GM12878 (cell line): ENCODE measurements at regions of chr6 and their contacts with region 1.

Region 1: DNA sequence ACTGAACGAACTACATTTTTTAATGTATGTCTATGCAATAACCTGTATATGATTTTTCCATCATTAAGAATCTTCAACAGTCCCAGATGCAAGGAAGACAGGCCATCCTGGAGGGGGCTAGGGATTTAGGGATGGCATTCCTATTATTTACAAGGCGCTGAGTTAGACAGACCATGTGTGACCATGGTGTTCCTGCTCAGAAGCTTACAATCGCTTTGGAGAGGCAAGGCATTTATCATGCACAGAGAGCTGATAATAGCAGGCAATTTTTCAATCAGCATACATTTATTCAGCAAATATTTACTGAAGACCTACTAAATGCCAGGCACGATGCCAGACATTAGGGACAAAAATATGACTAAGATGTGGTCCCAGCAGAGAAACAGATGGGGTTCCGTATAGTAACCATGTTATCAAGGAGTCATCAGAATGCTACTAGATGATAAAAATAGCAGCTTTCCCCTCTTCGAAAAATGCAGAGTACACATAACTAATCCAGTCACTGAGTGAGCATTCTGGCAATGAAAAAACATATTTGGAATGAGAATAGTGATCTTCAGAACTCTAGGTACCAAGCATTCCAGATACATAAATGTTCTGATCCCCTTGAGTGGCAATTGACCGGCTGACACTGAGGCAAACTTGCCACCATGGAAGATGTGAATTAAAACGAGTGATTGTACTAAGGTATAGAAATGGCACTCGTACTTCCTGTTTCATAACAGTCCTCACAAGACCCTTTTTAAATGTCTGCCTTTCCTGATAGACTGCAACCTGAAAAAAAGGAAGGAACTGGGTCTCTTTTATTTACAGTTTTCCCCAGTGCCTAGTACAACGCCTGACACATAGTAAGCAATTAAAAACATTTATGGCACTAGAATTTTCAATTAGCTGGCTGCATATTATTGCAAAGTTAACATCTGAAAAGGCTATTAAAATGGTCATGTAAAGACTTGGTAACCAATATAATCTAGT is 135.7 kb downstream of the ATXN1 start:
- DNase-seq: no peak
- ATAC-seq: no peak
- H3K4me3 ChIP-seq: no peak overlapping the region
- H3K27ac ChIP-seq: no peak overlapping the region
- H3K4me1 ChIP-seq: peaks cover 11% of the 10 kb centered on the region
- H3K27me3 ChIP-seq: no peaks in the 10 kb centered on the region
- CTCF ChIP-seq: no peak
- EP300 ChIP-seq: no peak
- POLR2A ChIP-seq: no peak
- RAD21 ChIP-seq: no peak

Region 2: DNA sequence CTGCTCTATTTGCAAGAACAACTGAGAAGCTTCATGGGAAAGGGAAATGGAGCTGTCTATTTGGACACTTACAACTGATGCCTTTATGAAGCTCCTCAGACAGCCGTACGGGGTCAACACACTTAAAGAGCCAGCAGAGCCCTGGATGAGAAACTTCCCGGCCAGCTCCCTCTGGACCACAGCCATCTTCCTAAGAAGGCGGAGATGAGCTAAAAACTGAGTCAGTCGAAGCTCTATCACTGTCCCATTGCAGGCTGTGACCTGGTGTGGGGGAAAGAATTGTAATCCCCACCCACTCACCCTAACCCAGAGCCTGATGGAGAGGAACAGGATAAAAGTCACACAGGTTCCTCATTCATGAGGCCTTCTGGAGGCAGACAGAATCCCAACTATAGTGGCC is 1740.1 kb before region 1 on chr6:
- CTCF ChIA-PET with region 1: no interaction called
- POLR2A ChIA-PET with region 1: interaction called, 10 read pairs
- RAD21 ChIA-PET with region 1: no interaction called
- SMC1A ChIA-PET with region 1: no interaction called
- in situ Hi-C with region 1: no loop called
- intact Hi-C with region 1: no loop called
- DNase-seq: no peak
- ATAC-seq: no peak
- H3K4me3 ChIP-seq: no peak overlapping the region
- H3K27ac ChIP-seq: no peak overlapping the region
- H3K4me1 ChIP-seq: no peaks in the 10 kb centered on the region
- H3K27me3 ChIP-seq: no peaks in the 10 kb centered on the region
- CTCF ChIP-seq: no peak
- EP300 ChIP-seq: no peak
- POLR2A ChIP-seq: no peak
- RAD21 ChIP-seq: no peak

Region 3: DNA sequence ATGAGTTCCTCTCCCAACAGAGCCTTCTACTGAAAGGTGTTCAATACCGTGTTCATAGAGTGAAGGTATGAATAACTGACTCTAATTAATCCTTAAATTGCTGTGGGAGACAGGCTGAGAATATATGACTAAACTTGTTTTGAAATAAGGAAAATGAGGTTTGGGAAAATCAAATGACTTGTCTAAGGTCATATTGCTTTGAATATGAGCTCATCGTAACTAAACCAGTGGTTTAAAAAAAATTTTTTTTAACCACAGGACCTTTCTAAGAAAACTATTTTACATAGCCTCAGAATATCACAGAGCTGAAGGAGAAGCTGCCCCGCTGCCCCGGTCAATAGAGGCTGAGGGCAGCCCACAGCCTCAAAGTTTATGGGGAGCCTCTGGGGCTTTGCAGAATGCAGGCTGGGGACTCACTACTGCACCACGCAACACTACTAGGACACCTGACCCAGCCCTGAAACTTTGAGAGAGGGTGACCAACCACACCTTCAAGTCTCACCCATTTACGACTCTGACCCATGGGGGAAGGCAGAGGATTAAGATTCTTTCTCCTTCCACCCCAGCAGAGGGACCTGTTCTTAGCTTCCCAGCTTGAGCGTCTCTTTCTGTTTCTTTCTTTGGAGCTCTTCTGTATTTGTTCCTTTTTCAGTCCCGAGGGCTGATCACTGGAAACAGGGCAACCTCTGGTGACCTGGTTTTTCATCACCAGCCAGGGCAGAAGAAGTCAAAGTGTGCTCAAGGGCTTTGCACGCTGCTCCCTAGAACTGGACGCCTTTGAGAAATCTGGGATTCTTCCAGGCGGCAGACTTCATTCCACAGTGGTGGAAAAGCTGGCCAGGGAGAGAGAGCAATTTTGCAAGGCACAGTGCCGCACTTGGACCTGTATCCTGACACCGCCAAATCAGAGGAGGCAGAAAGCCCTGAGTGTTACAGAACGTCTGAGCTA is 84.5 kb before region 1 on chr6:
- CTCF ChIA-PET with region 1: no interaction called
- POLR2A ChIA-PET with region 1: no interaction called
- RAD21 ChIA-PET with region 1: no interaction called
- SMC1A ChIA-PET with region 1: no interaction called
- in situ Hi-C with region 1: no loop called
- intact Hi-C with region 1: no loop called
- DNase-seq: no peak
- ATAC-seq: peak; percentile 93
- H3K4me3 ChIP-seq: no peak overlapping the region
- H3K27ac ChIP-seq: no peak overlapping the region
- H3K4me1 ChIP-seq: peaks cover 7% of the 10 kb centered on the region
- H3K27me3 ChIP-seq: no peaks in the 10 kb centered on the region
- CTCF ChIP-seq: peak; percentile 9 to 26 (median 13); a peak in 3 of 6 replicates
- EP300 ChIP-seq: peak in 1 of 2 experiments; percentile 44; a peak in 1 of 4 replicates
- POLR2A ChIP-seq: no peak
- RAD21 ChIP-seq: 0 out of 2 replicates have a peak, but pooled peaks have one; percentile 23